Heart left ventricle (tissue), 16 donors: ENCODE measurements at regions of chr9 and their contacts with region 1.

Region 1: DNA sequence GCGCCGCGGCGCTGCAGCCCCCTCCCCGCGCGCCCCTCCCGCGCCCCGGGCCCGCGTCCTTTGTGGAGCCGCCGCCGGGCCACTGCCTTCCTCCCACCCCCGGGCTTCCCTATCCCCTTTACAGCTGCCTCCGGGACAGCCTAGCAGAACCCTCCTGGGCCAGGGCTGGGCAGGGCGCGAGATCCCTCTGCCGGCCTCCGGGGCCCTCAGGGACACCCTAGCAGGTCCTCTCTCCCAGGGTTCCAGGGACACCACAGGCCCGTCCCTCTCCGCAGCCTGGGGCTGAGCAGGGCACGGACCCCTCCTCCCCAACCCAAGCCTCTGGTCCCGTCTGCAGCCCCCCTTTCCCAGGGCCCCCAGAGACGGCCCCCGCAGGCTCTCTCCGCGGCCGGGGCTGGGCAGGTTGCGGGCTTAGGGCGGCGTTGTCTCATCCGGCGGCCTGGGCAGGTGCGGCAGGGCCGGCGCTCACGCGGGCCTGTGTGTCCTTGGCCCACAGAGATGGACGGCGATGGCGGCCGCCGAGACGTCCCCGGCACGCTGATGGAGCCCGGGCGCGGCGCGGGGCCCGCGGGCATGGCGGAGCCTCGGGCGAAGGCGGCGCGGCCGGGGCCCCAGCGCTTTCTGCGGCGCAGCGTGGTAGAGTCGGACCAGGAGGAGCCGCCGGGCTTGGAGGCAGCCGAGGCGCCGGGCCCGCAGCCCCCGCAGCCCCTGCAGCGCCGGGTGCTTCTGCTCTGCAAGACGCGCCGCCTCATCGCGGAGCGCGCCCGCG is 677 bp downstream of the WNK2 start:
- DNase-seq: peak in 2 of 5 donors; percentile 32 to 66
- ATAC-seq: peak in 2 of 4 donors; percentile 9
- H3K4me3 ChIP-seq: peak overlapping the region; percentile 53 to 82 (median 61)
- H3K27ac ChIP-seq: peak overlapping the region; percentile 49 to 98 (median 85)
- H3K4me1 ChIP-seq: peaks cover 0 to 67% (median 19%) of the 10 kb centered on the region in 12 donors
- H3K27me3 ChIP-seq: peaks cover 0 to 42% (median 0%) of the 10 kb centered on the region in 9 donors
- CTCF ChIP-seq: no peak
- POLR2A ChIP-seq: no peak

Region 2: DNA sequence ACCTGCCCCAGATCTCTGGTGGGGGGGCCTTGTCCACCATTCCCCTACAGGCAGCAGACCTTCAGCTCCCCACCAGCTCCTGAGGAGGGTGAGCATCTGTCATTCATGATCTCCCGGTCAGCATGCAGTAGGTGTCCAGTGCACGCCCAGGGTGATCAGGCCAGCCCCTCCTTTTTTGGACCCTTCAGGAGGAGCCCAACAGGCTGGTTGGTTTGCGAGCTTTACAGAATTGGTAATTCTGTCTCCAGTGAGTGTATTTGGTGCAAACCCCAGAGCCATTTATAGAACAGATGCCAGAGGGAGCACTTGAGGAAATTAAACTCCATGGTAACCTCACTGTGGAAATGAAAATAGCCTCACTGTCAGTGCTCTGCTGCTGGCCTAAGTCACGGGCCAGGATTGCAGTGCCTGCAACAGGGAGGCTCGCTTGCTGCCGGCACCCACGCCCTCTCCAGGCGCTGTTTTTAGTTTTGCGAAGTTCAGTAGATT is 22.8 kb after region 1 on chr9:
- intact Hi-C with region 1: loop called in 2 of 10 experiments (anchors 1 to 2 kb)
- DNase-seq: peak; percentile 61 to 78 (median 73)
- ATAC-seq: peak; percentile 66 to 81 (median 73)
- H3K4me3 ChIP-seq: peak overlapping the region in 4 of 12 donors; percentile 11 to 37 (median 26)
- H3K27ac ChIP-seq: peak overlapping the region; percentile 47 to 99 (median 88)
- H3K4me1 ChIP-seq: peaks cover 0 to 86% (median 44%) of the 10 kb centered on the region in 12 donors
- H3K27me3 ChIP-seq: no peaks in the 10 kb centered on the region
- CTCF ChIP-seq: peak in 5 of 12 donors; percentile 7 to 38 (median 22)
- POLR2A ChIP-seq: no peak

Region 3: DNA sequence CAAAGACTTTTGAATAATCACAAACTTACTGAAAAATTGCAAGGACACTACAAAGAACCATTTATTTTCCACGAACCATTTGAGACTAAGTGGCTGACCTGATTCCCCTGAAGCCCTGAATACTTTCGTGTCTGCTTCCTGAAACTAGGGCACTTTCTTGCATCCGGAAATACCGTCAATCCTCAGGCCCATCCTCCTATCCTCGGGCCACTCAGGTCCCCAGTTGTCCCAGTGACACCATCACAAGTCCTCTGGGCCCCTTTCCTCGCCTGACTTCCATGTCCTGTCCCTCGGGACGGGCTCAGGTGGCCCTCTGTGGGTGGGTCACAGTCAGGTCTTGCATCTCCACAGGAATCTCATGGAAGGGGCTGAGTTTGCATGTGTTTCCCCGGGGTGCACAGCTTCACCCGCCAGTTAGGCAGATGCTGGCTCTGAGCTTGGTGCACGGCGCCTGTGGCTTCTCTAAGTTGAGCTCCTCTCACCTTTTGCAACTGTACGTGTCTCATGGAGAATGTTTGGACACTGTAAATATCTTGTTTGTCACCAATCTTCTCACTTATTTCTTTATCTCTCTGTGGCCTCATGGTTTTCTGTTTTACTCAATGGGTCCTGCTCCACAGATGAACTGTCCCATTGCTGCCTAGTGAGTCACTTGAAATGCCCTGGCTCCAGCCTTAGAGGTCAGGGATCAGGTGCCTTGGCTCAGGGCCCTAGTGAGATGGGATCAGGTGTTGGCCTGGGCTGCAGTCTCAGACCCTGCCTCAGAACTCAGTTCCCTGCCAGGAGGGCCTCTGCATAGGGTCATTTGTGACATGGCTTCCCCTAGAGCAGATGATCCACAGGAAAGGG is 60.7 kb after region 1 on chr9:
- intact Hi-C with region 1: loop called in 1 of 10 experiments (anchors 5 kb)
- DNase-seq: no peak
- ATAC-seq: peak in 2 of 4 donors; percentile 19 to 29
- H3K4me3 ChIP-seq: no peak overlapping the region
- H3K27ac ChIP-seq: peak overlapping the region in 1 of 12 donors; percentile 45
- H3K4me1 ChIP-seq: peaks cover 0 to 43% (median 6%) of the 10 kb centered on the region in 12 donors
- H3K27me3 ChIP-seq: no peaks in the 10 kb centered on the region
- CTCF ChIP-seq: no peak
- POLR2A ChIP-seq: no peak

Region 4: GRCh38 chr9:93531374-93531773 is 346.8 kb after region 1 on chr9:
- intact Hi-C with region 1: no loop called
- DNase-seq: no peak
- ATAC-seq: peak in 2 of 4 donors; percentile 37 to 48
- H3K4me3 ChIP-seq: no peak overlapping the region
- H3K27ac ChIP-seq: no peak overlapping the region
- H3K4me1 ChIP-seq: peaks cover 0 to 15% (median 3%) of the 10 kb centered on the region in 12 donors
- H3K27me3 ChIP-seq: no peaks in the 10 kb centered on the region
- CTCF ChIP-seq: peak in 4 of 12 donors; percentile 8 to 25 (median 12)
- POLR2A ChIP-seq: no peak